CD8-positive, alpha-beta T cell (primary cell): ENCODE measurements at regions of chr10 and their contacts with region 1.

Region 1: GRCh38 chr10:104515678-104516222 is 125.3 kb upstream of the SORCS3 start:
- DNase-seq: no peak
- ATAC-seq: no peak
- H3K4me3 ChIP-seq: no peak overlapping the region
- H3K4me3 Mint-ChIP-seq: no peak overlapping the region
- H3K27ac ChIP-seq: no peak overlapping the region
- H3K27ac Mint-ChIP-seq: no peak overlapping the region
- H3K4me1 ChIP-seq: no peaks in the 10 kb centered on the region
- H3K4me1 Mint-ChIP-seq: no peaks in the 10 kb centered on the region
- H3K27me3 ChIP-seq: no peaks in the 10 kb centered on the region
- H3K27me3 Mint-ChIP-seq: peaks cover 6% of the 10 kb centered on the region
- CTCF ChIP-seq: no peak

Region 2: DNA sequence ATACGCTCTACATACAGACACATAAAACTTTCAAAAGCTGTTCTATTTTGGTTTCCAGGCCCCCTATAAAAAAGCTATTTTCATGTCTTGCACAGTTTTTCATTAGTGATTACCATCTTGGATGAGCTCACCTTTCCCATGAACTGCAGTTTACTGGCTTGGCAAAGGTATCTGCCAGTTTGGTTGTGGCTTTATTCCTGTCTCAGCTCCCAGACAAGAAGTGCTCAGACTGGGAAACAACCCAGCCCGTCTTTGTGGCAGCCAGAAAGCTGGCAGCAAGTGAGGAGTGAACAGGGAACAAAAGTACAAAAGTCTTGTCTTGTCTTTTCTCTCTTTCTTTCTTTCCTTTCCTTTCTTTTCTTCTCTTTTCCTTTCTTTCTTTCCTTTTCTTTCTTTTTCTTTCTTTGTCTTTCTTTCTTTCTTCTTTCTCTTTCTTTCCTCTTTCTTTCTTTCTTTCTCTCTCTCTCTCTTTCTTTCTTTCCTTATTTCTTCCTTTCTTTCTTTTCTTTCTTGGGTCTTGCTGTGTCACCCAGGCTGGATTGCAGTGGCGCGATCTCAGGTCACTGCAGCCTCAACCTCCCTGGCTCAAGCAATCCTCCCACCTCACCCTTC is 23.3 kb before region 1 on chr10:
- CTCF ChIA-PET with region 1: no interaction called
- POLR2A ChIA-PET with region 1: no interaction called
- intact Hi-C with region 1: loop called in 1 of 2 experiments (anchors 2 kb)
- DNase-seq: no peak
- ATAC-seq: no peak
- H3K4me3 ChIP-seq: no peak overlapping the region
- H3K4me3 Mint-ChIP-seq: no peak overlapping the region
- H3K27ac ChIP-seq: no peak overlapping the region
- H3K27ac Mint-ChIP-seq: no peak overlapping the region
- H3K4me1 ChIP-seq: no peaks in the 10 kb centered on the region
- H3K4me1 Mint-ChIP-seq: no peaks in the 10 kb centered on the region
- H3K27me3 ChIP-seq: no peaks in the 10 kb centered on the region
- H3K27me3 Mint-ChIP-seq: peaks cover 8% of the 10 kb centered on the region
- CTCF ChIP-seq: no peak

Region 3: GRCh38 chr10:104844073-104844472 is 328.3 kb after region 1 on chr10:
- CTCF ChIA-PET with region 1: no interaction called
- POLR2A ChIA-PET with region 1: no interaction called
- intact Hi-C with region 1: no loop called
- DNase-seq: no peak
- ATAC-seq: no peak
- H3K4me3 ChIP-seq: no peak overlapping the region
- H3K4me3 Mint-ChIP-seq: no peak overlapping the region
- H3K27ac ChIP-seq: no peak overlapping the region
- H3K27ac Mint-ChIP-seq: no peak overlapping the region
- H3K4me1 ChIP-seq: no peaks in the 10 kb centered on the region
- H3K4me1 Mint-ChIP-seq: no peaks in the 10 kb centered on the region
- H3K27me3 ChIP-seq: no peaks in the 10 kb centered on the region
- H3K27me3 Mint-ChIP-seq: peaks cover 4% of the 10 kb centered on the region
- CTCF ChIP-seq: no peak